Aorta (tissue), 5 donors: ENCODE measurements at regions of chr1 and their contacts with region 1.

Region 1: DNA sequence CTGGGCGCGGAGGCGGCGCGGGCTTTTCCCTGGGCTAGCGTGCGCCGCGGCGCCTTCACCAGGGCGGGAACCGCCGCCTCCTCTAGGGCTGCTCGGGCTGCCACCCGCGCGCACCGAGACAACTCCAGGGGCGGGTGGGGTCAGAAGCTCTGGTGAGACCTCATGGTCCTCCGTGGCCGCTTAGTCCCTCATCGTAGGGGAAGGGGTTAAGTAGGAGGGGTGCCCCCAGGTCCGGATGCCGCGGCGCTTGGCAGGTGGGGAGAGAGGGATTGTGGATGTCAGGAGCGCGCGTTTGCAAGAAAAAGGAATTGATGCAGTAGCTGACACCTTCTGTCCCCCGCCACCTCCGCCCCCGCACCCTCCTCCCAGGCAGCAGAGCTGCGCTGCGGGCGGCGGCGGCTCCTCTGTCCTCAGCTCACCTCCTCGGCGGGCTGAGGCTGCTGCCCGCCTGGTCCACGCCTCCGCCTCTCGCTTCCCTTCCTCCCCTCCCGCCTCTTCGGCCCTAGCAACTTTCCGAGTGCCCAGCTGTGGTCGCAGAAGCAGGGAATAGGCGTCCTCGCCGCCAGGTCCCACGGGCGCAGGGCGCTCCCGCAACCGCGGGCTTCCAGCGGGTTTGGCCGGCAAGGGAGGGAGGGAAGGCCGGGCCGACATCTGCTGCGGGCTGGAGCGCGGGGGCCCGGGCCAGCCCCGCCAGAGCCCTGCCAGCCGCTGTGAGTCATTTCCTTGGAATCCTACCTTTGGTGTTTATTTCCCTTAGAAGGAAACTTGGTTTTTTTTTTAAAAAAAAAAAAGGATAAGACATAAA is 822 bp downstream of the SERTAD4 start:
- DNase-seq: peak; percentile 63 to 88
- ATAC-seq: peak; percentile 67
- H3K4me3 ChIP-seq: peak overlapping the region; percentile 80 to 97
- H3K27ac ChIP-seq: peak overlapping the region; percentile 36 to 89
- H3K4me1 ChIP-seq: no peaks in the 10 kb centered on the region
- H3K27me3 ChIP-seq: no peaks in the 10 kb centered on the region

Region 2: DNA sequence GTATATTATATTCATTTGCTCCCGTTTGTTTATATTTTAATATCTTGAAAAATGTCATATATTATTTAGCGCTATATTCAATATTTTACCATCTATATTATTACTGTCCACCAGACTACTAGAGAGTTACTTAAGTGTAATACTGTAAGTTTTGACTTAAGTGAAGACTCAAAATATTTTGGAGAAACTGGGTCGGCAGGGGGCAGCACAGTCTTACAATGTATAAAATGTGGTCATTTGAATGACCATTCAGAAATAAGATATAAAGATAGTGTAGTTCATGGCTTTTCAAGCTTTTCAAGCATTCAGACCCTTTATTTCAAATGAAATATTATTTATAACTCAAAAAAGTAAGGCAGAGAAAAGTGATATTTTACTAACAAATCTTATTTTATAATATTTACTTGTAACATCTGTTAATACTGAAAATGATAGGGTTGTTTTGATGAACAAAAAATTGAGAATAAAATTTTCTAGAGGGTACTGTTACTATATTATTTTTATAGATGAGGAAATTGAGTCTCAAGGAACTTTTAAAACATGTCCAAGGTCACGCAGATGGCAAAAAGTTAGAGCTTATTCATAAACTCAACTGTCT is 89.9 kb before region 1 on chr1:
- intact Hi-C with region 1: loop called in 1 of 2 experiments (anchors 10 kb)
- DNase-seq: peak; percentile 80 to 90
- ATAC-seq: no peak
- H3K4me3 ChIP-seq: no peak overlapping the region
- H3K27ac ChIP-seq: no peak overlapping the region
- H3K4me1 ChIP-seq: no peaks in the 10 kb centered on the region
- H3K27me3 ChIP-seq: no peaks in the 10 kb centered on the region

Region 3: GRCh38 chr1:210185063-210185462 is 48.4 kb before region 1 on chr1:
- intact Hi-C with region 1: no loop called
- DNase-seq: no peak
- ATAC-seq: no peak
- H3K4me3 ChIP-seq: no peak overlapping the region
- H3K27ac ChIP-seq: no peak overlapping the region
- H3K4me1 ChIP-seq: no peaks in the 10 kb centered on the region
- H3K27me3 ChIP-seq: no peaks in the 10 kb centered on the region

Region 4: GRCh38 chr1:210394281-210394821 is 160.9 kb after region 1 on chr1:
- intact Hi-C with region 1: loop called in 1 of 2 experiments (anchors 10 kb)
- DNase-seq: peak in 1 of 2 donors; percentile 55
- ATAC-seq: peak; percentile 76
- H3K4me3 ChIP-seq: no peak overlapping the region
- H3K27ac ChIP-seq: peak overlapping the region in 1 of 2 donors; percentile 11
- H3K4me1 ChIP-seq: peaks cover 0 to 3% of the 10 kb centered on the region in 2 donors
- H3K27me3 ChIP-seq: no peaks in the 10 kb centered on the region